ENCODE measurements at regions of chr16 and their contacts with region 1.

Region 1: DNA sequence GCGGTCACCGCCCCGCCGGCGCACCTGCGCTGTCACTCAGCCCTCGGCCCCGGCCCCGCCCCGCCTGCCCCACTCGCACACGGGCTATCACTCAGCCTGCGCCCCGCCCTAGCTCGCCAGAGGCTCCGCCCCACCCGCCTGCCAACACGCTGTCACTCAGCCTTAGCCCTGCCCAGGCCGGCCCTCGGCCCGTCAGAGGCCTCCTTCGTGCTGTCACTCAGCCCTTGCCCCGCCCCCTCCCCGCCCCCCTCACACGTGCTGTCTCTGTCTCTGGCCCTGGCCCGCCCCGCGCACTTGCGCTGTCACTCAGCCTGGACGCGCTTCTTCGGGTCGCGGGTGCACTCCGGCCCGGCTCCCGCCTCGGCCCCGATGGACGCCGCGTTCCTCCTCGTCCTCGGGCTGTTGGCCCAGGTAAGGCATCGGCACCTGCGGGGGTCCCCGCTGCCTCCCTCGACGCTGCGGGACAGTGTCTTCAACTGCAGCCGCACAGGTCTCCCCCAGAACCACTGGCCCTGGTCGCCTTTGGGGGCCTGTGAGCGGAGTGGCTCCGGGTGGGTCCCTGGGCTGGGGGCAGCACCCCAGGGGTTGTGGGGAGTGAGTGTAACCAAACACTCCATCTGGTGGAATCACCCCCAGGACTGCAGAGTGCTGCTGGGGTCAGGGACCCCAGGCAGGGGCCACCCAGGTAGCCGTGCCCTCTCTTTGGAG is at the start of gene CDH15:
- DNase-seq: peak; percentile 86
- H3K4me3 Mint-ChIP-seq: peak within 1 kb of the TSS; percentile 71
- H3K27ac Mint-ChIP-seq: peak within 1 kb of the TSS; percentile 55
- H3K4me1 Mint-ChIP-seq: peaks cover 6% of the 10 kb centered on the region
- H3K27me3 Mint-ChIP-seq: no peaks in the 10 kb centered on the region
- total RNA-seq, gene CDH15: not detected in 2 replicates

Region 2: GRCh38 chr16:88737298-88738150 is 434.1 kb before region 1 on chr16:
- intact Hi-C with region 1: loop called (anchors 1 kb)
- DNase-seq: peak; percentile 49
- H3K4me3 Mint-ChIP-seq: no peak overlapping the region
- H3K27ac Mint-ChIP-seq: no peak overlapping the region
- H3K4me1 Mint-ChIP-seq: no peaks in the 10 kb centered on the region
- H3K27me3 Mint-ChIP-seq: no peaks in the 10 kb centered on the region

Region 3: DNA sequence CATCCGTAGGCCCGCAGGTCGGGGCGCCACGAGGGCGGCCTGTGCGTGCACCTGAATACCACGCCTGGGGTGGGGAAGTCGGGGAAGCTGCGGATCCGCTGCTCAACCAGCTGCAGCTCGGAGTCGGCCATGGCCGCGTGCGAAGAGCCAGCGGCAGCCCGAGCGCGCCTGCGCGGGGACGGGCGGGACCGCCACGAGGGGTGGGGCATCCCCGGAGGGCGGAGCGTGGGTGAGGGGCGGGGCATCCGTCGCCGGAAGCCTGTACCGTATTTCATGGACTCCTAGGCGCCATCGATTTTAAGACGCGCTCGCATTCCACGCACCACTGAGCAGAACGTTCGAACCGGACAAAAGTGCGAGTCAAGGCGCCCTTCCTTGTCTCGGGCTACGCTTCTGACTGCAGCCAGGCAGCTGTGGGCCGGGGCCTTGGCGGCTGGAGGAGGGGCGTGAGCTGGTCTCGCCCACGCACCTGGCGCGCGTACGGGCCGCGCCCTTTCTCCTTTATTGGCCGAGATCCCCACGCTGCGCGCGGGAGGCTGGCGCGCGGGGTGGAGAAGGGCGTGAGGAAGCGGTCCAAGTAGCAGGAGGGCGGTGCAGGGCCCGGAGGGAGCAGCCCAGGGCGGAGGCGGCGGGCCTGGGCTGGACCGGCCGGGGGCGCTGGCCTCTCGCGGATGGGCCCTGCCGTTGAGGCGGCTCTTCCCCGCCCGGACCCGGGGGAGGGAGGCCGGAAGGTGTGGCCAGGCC is 359.7 kb before region 1 on chr16 and contains the start of gene APRT:
- intact Hi-C with region 1: loop called (anchors 1 kb)
- DNase-seq: peak; percentile 97
- H3K4me3 Mint-ChIP-seq: peak within 1 kb of the TSS; percentile 90
- H3K27ac Mint-ChIP-seq: peak within 1 kb of the TSS; percentile 98
- H3K4me1 Mint-ChIP-seq: peaks cover 11% of the 10 kb centered on the region
- H3K27me3 Mint-ChIP-seq: no peaks in the 10 kb centered on the region
- total RNA-seq, gene APRT: 301 and 303 TPM in 2 replicates

Region 4: GRCh38 chr16:89052890-89053592 is 118.6 kb before region 1 on chr16:
- intact Hi-C with region 1: no loop called
- DNase-seq: no peak
- H3K4me3 Mint-ChIP-seq: peak overlapping the region; percentile 86
- H3K27ac Mint-ChIP-seq: peak overlapping the region; percentile 81
- H3K4me1 Mint-ChIP-seq: no peaks in the 10 kb centered on the region
- H3K27me3 Mint-ChIP-seq: peaks cover 1% of the 10 kb centered on the region

Region 5: GRCh38 chr16:89193021-89193575 is 21.5 kb after region 1 on chr16:
- intact Hi-C with region 1: loop called (anchors 1 kb)
- DNase-seq: peak; percentile 48
- H3K4me3 Mint-ChIP-seq: no peak overlapping the region
- H3K27ac Mint-ChIP-seq: no peak overlapping the region
- H3K4me1 Mint-ChIP-seq: no peaks in the 10 kb centered on the region
- H3K27me3 Mint-ChIP-seq: no peaks in the 10 kb centered on the region

Region 6: GRCh38 chr16:89246903-89247733 is 75.5 kb after region 1 on chr16:
- intact Hi-C with region 1: loop called (anchors 1 kb)
- DNase-seq: peak; percentile 88
- H3K4me3 Mint-ChIP-seq: peak overlapping the region; percentile 66
- H3K27ac Mint-ChIP-seq: no peak overlapping the region
- H3K4me1 Mint-ChIP-seq: peaks cover 12% of the 10 kb centered on the region
- H3K27me3 Mint-ChIP-seq: peaks cover 2% of the 10 kb centered on the region

Measured in activated T-helper 1 cell treated with anti-CD3 and anti-CD28 coated beads, Interleukin-12 subunit alpha, Interleukin-12 subunit beta, Interleukin-2, Interleukin-4 antibody, amounts not matched to agents 30 ng/mL and 10 ng/mL and 1 ng/mL, durations not matched to agents 14 hours and 24 hours and 36 hours (primary cell).